ENCODE measurements at regions of chr14 and their contacts with region 1.

Region 1: DNA sequence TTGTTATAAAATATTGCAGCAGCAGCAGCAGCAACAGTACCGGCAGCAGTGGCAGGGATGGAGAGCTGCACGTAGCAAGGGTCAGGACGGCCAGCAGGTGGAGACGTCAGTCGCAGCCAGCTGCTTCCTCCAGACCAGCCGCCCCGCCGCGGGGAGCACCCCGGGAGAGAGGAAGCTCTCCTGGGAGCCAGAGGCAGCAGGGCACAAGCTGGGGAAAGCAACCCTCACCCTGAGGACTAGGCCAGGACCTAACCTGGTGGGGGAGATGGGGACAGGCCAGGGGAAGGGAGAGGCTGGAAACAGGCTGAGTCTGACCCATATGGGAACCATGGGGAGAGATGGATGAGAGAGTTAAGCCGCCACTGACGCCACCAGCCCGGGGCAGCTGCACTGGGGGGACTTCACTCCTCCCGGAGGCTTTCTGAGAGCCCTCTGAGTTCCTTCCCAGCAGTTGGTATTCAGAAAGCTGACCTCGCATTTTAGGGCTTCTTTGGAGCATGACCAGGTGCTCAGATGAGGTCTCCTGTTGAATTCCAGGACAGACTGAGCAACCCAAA is 56.3 kb downstream of the SPTB start:
- DNase-seq: peak; percentile 40
- ATAC-seq: peak; percentile 97
- H3K4me3 ChIP-seq: peak overlapping the region in 1 of 3 experiments; percentile 33; a peak in 1 of 6 replicates
- H3K27ac ChIP-seq: no peak overlapping the region
- H3K4me1 ChIP-seq: peaks cover 16% of the 10 kb centered on the region
- H3K27me3 ChIP-seq: peaks cover 17 to 84% of the 10 kb centered on the region in 2 experiments
- CTCF ChIP-seq: peak; percentile 94
- EP300 ChIP-seq: no peak
- POLR2A ChIP-seq: no peak
- RAD21 ChIP-seq: peak; percentile 82

Region 2: DNA sequence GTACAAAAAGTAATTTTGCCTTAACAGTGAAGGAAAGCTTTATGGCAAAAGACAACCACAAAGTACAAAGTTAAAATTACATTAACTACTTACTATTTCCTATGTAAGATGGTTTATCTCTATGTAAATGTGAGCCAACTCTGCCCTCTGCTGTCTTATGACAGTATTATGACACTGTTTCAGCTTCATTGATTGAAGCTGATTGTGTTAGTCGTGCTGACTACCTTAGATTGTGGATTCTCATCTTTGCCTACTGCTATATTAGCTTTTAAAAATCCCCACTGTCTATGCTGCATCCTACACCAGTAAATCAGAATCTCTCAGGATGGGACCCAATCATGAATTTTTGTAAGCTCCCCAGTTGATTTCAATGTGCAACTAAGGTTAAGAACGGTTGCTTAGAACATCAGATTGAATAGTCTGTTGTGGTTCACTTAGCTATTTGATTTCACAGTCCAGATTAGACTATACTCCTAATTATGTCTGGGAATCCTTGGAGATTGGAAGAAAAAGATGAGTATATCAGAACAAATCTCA is 68.5 kb after region 1 on chr14:
- CTCF ChIA-PET with region 1: interaction called, 21 read pairs
- POLR2A ChIA-PET with region 1: interaction called, 4 read pairs
- in situ Hi-C with region 1: loop called (anchors 5 kb)
- intact Hi-C with region 1: loop called (anchors 5 kb)
- DNase-seq: peak; percentile 56
- ATAC-seq: peak; percentile 87
- H3K4me3 ChIP-seq: no peak overlapping the region
- H3K27ac ChIP-seq: no peak overlapping the region
- H3K4me1 ChIP-seq: no peaks in the 10 kb centered on the region
- H3K27me3 ChIP-seq: no peaks in the 10 kb centered on the region
- CTCF ChIP-seq: peak; percentile 76
- EP300 ChIP-seq: no peak
- POLR2A ChIP-seq: no peak
- RAD21 ChIP-seq: peak; percentile 51; the same call in 1 of the 2 replicates

Region 3: DNA sequence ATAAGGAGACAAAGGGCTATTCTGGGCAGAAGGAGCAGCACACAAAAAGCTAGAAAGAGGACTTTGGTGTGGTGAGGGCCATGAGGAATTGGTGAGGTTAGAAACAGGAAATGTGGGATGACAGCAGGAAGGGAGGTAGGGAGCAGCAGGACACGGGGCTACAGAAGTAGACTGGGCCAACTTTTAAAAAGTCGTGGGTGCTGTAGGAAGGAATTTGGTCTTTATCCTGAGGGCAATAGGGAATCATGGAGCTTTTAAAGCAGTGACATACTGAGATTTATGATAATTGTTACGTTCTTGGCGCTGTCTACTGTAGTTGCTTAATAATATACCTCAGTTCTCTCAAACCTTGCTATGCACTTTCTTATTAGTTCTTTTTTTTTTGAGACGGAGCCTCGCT is 82.6 kb after region 1 on chr14:
- CTCF ChIA-PET with region 1: no interaction called
- POLR2A ChIA-PET with region 1: no interaction called
- in situ Hi-C with region 1: no loop called
- intact Hi-C with region 1: loop called (anchors 5 kb)
- DNase-seq: no peak
- ATAC-seq: no peak
- H3K4me3 ChIP-seq: no peak overlapping the region
- H3K27ac ChIP-seq: no peak overlapping the region
- H3K4me1 ChIP-seq: 0 out of 2 replicates have a peak, but pooled peaks cover 7% of the 10 kb centered on the region
- H3K27me3 ChIP-seq: 0 out of 5 replicates have a peak, but pooled peaks cover 0 to 3% of the 10 kb centered on the region in 2 experiments
- CTCF ChIP-seq: no peak
- EP300 ChIP-seq: no peak
- POLR2A ChIP-seq: no peak
- RAD21 ChIP-seq: no peak

Region 4: DNA sequence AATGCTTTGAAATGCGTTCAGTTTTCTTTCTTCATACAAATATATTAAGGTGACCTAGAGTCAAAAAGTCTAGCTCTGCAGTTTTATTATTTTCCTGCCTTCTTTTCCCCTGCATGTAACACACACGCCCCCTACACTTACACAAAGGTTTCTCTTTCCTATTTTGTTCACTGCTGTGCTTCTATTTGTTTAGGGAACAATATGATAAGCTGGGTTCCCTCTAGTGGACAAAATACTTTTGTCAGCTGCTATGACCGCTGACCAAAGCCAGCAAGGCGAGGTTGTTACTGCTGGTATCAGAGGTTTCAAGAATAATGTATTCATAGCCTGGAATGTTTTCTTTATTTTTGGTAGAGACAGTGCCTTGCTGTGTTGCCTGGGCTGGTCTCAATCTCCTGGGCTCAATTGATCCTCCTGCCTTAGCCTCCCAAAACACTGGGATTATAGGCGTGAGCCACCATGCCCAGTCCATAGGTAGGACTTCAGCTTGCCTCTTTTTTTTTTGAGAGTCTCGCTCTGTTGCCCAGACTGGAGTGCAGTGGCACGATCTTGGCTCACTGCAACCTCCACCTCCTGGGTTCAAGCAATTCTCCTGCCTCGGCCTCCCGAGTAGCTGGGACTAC is 196.7 kb after region 1 on chr14:
- CTCF ChIA-PET with region 1: interaction called, 3 read pairs
- POLR2A ChIA-PET with region 1: no interaction called
- in situ Hi-C with region 1: no loop called
- intact Hi-C with region 1: loop called (anchors 5 kb)
- DNase-seq: peak; percentile 85
- ATAC-seq: peak; percentile 99
- H3K4me3 ChIP-seq: no peak overlapping the region
- H3K27ac ChIP-seq: no peak overlapping the region
- H3K4me1 ChIP-seq: peaks cover 9% of the 10 kb centered on the region; the same call in 1 of the 2 replicates
- H3K27me3 ChIP-seq: no peaks in the 10 kb centered on the region
- CTCF ChIP-seq: peak; percentile 73
- EP300 ChIP-seq: no peak
- POLR2A ChIP-seq: no peak
- RAD21 ChIP-seq: peak; percentile 51